Activated T-helper 1 cell treated with anti-CD3 and anti-CD28 coated beads, Interleukin-12 subunit alpha, Interleukin-12 subunit beta, Interleukin-2, Interleukin-4 antibody, amounts not matched to agents 30 ng/mL and 10 ng/mL and 1 ng/mL, durations not matched to agents 14 hours and 24 hours and 36 hours (primary cell): ENCODE measurements at regions of chr7 and their contacts with region 1.

Region 1: DNA sequence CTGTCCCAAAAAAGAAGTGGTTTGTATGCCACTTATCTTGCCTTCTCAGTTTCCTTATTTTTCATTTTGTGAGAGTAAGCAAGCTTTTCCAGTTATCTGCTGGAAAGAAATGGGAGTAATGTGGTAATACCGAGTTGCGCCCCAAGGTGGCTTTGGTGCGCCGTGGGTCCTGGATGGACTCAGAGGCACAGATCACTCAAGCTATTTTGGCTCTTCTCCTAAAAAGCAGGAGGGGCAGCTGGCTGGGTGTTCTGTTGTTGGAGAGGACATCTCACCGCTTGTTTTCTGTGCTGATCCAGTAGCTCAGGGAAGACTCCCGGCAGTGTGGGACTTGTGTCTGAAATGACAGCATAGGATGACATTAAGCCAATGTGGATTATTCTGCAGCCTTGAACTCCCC is 16.4 kb downstream of the PRKRIP1 start:
- DNase-seq: no peak
- H3K4me3 Mint-ChIP-seq: no peak overlapping the region
- H3K27ac Mint-ChIP-seq: no peak overlapping the region
- H3K4me1 Mint-ChIP-seq: peaks cover 40% of the 10 kb centered on the region
- H3K27me3 Mint-ChIP-seq: no peaks in the 10 kb centered on the region

Region 2: GRCh38 chr7:102376964-102377466 is 35.5 kb before region 1 on chr7:
- intact Hi-C with region 1: no loop called
- DNase-seq: no peak
- H3K4me3 Mint-ChIP-seq: no peak overlapping the region
- H3K27ac Mint-ChIP-seq: peak overlapping the region; percentile 0
- H3K4me1 Mint-ChIP-seq: peaks cover 11% of the 10 kb centered on the region
- H3K27me3 Mint-ChIP-seq: no peaks in the 10 kb centered on the region

Region 3: GRCh38 chr7:102396027-102397019 is 16.2 kb before region 1 on chr7 and contains the start of gene PRKRIP1:
- intact Hi-C with region 1: loop called (anchors 1 kb)
- DNase-seq: peak; percentile 80
- H3K4me3 Mint-ChIP-seq: peak within 1 kb of the TSS; percentile 87
- H3K27ac Mint-ChIP-seq: peak within 1 kb of the TSS; percentile 70
- H3K4me1 Mint-ChIP-seq: peaks cover 15% of the 10 kb centered on the region
- H3K27me3 Mint-ChIP-seq: no peaks in the 10 kb centered on the region
- total RNA-seq, gene PRKRIP1: 25.7 and 28.3 TPM in 2 replicates

Region 4: DNA sequence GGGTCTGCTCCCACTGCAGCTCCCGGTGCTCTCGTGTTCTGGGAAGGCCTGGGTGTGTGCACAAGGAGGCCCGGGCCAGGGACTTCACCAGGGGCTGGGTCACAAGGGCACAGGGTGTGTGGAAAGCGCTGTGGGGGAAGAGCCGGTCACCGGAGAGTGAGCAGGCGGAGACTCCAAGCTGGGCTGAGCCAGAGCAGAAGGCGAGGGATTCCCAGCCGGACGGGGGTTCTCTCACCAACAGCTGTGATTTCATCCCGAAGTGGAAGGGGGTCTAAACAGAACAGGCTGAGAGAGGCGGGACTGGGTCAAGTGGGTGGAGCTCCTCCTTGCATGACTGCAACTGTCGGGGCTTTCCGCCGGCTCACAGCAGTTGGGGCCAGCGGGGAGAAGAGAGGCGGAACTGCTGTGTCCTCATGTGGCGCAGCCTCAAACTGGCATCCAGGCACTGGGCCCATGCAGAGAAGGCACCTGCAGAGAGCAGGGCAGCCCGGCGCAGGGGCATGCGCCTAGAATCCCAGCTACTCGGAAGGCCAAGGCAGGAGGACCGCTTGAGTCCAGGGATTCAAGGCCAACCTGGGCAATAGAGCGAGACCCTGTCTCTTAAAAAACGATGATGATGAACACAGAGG is 13.2 kb after region 1 on chr7:
- intact Hi-C with region 1: loop called (anchors 1 kb)
- DNase-seq: peak; percentile 83
- H3K4me3 Mint-ChIP-seq: peak overlapping the region; percentile 86
- H3K27ac Mint-ChIP-seq: peak overlapping the region; percentile 100
- H3K4me1 Mint-ChIP-seq: peaks cover 68% of the 10 kb centered on the region
- H3K27me3 Mint-ChIP-seq: no peaks in the 10 kb centered on the region

Region 5: GRCh38 chr7:102433219-102434038 is 20.9 kb after region 1 on chr7 and contains the start of gene ORAI2:
- intact Hi-C with region 1: loop called (anchors 1 kb)
- DNase-seq: peak; percentile 82
- H3K4me3 Mint-ChIP-seq: peak within 1 kb of the TSS; percentile 84
- H3K27ac Mint-ChIP-seq: peak within 1 kb of the TSS; percentile 87
- H3K4me1 Mint-ChIP-seq: peaks cover 58% of the 10 kb centered on the region
- H3K27me3 Mint-ChIP-seq: no peaks in the 10 kb centered on the region
- total RNA-seq, gene ORAI2: 55.2 and 59.9 TPM in 2 replicates

Region 6: DNA sequence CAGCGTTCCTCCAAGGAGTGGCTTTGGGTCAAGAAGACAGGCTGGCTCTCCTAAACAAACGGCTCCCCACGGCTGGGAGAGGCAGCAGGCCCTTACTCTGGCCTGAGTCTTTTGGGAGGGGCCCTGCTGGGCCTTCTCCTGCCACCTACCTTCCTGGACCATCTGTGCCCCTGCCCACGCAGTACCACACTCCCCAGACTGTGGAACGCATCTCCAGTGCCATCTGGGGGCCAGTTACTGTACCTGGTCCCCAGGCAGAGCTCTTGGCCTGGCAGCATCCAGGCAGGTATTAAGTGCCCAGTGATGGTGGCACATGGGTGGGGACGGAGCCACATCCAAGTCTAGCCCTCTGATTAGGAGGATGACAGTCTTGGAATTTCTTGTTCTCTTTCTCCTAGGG is 37.7 kb after region 1 on chr7:
- intact Hi-C with region 1: loop called (anchors 1 kb)
- DNase-seq: no peak
- H3K4me3 Mint-ChIP-seq: no peak overlapping the region
- H3K27ac Mint-ChIP-seq: no peak overlapping the region
- H3K4me1 Mint-ChIP-seq: no peaks in the 10 kb centered on the region
- H3K27me3 Mint-ChIP-seq: no peaks in the 10 kb centered on the region